Pancreas (tissue), 10 donors: ENCODE measurements at regions of chr19 and their contacts with region 1.

Region 1: DNA sequence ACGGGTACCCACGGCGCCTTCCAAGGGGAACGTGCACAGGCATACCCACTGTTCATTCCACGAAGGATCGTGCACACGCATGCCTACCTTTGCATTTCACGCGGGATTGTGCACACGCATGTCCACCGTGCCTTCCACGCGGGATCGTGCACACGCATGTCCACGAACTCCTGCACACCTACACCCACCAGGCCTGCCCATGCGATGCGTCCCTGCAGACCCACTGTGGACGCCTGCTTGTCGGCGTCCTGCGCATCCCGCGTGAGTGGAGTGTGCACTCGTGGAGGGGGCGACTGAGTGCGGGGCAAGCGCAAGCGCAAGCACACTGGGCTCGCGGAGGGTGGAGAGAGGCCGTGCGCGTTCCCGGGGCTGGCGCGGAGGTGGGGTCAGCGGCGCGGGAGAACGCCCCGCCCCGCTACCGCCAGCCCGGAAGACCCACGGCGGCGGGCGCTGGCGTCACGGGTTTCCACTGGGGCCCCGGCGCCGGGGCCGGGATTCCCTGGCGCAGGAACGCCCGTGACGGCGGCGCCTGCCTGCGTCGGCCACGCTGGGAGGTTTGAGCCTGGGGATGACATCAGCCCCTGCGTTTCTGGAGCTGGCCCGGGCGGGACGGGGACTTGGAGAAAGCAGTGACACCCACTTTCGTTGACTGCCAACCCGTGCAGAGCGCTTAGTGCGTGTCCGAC is 18.7 kb downstream of the GADD45B start:
- DNase-seq: peak; percentile 66 to 87 (median 76)
- ATAC-seq: peak; percentile 47 to 68 (median 58)
- H3K4me3 ChIP-seq: peak overlapping the region; percentile 20 to 63 (median 40)
- H3K27ac ChIP-seq: peak overlapping the region; percentile 54 to 88 (median 78)
- H3K4me1 ChIP-seq: peaks cover 7 to 30% (median 16%) of the 10 kb centered on the region in 3 donors
- H3K27me3 ChIP-seq: no peaks in the 10 kb centered on the region
- CTCF ChIP-seq: no peak

Region 2: GRCh38 chr19:2578901-2579677 is 84.5 kb after region 1 on chr19:
- intact Hi-C with region 1: loop called in 1 of 3 experiments (anchors 5 kb)
- DNase-seq: peak; percentile 83 to 95 (median 90)
- ATAC-seq: peak; percentile 84 to 89 (median 87)
- H3K4me3 ChIP-seq: peak overlapping the region; percentile 21 to 53 (median 34)
- H3K27ac ChIP-seq: peak overlapping the region; percentile 35 to 73 (median 53)
- H3K4me1 ChIP-seq: peaks cover 7 to 32% (median 11%) of the 10 kb centered on the region in 3 donors
- H3K27me3 ChIP-seq: no peaks in the 10 kb centered on the region
- CTCF ChIP-seq: peak; percentile 58 to 79 (median 72)